Activated CD4-positive, alpha-beta memory T cell treated with anti-CD3 and anti-CD28 coated beads for 36 hours (primary cell): ENCODE measurements at regions of chr4 and their contacts with region 1.

Region 1: GRCh38 chr4:75895744-75896314 is 6.4 kb downstream of the PPEF2 start:
- DNase-seq: peak; percentile 14
- H3K4me3 Mint-ChIP-seq: no peak overlapping the region
- H3K27ac Mint-ChIP-seq: no peak overlapping the region
- H3K4me1 Mint-ChIP-seq: no peaks in the 10 kb centered on the region
- H3K27me3 Mint-ChIP-seq: no peaks in the 10 kb centered on the region

Region 2: GRCh38 chr4:75867135-75867534 is 28.7 kb before region 1 on chr4:
- CTCF ChIA-PET with region 1: no interaction called
- POLR2A ChIA-PET with region 1: no interaction called
- intact Hi-C with region 1: no loop called
- DNase-seq: no peak
- H3K4me3 Mint-ChIP-seq: no peak overlapping the region
- H3K27ac Mint-ChIP-seq: no peak overlapping the region
- H3K4me1 Mint-ChIP-seq: no peaks in the 10 kb centered on the region
- H3K27me3 Mint-ChIP-seq: no peaks in the 10 kb centered on the region

Region 3: GRCh38 chr4:75880278-75880677 is 15.6 kb before region 1 on chr4:
- CTCF ChIA-PET with region 1: interaction called, 11 read pairs
- POLR2A ChIA-PET with region 1: no interaction called
- intact Hi-C with region 1: no loop called
- DNase-seq: no peak
- H3K4me3 Mint-ChIP-seq: no peak overlapping the region
- H3K27ac Mint-ChIP-seq: no peak overlapping the region
- H3K4me1 Mint-ChIP-seq: no peaks in the 10 kb centered on the region
- H3K27me3 Mint-ChIP-seq: no peaks in the 10 kb centered on the region

Region 4: DNA sequence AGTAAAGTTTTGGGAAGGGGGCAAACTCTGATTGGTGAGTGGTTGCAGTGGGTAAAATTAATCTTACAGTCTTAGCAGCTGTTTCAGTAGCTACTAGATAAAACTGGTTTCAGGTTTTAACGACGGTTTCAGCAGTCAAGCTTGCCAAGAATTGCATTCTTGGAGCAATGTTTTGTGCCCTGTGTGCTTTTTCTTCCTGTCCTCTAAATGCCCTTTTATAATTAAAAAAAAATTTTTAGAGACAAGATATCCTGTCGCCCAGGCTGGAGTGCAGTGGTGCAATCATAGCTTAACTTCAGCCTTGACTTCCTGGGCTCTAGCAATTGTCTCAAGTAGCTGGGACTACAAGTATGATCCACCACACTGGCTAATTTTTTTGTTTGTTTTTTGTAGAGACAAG is 12.7 kb after region 1 on chr4:
- CTCF ChIA-PET with region 1: interaction called, 33 read pairs
- POLR2A ChIA-PET with region 1: no interaction called
- intact Hi-C with region 1: no loop called
- DNase-seq: no peak
- H3K4me3 Mint-ChIP-seq: no peak overlapping the region
- H3K27ac Mint-ChIP-seq: no peak overlapping the region
- H3K4me1 Mint-ChIP-seq: no peaks in the 10 kb centered on the region
- H3K27me3 Mint-ChIP-seq: no peaks in the 10 kb centered on the region

Region 5: DNA sequence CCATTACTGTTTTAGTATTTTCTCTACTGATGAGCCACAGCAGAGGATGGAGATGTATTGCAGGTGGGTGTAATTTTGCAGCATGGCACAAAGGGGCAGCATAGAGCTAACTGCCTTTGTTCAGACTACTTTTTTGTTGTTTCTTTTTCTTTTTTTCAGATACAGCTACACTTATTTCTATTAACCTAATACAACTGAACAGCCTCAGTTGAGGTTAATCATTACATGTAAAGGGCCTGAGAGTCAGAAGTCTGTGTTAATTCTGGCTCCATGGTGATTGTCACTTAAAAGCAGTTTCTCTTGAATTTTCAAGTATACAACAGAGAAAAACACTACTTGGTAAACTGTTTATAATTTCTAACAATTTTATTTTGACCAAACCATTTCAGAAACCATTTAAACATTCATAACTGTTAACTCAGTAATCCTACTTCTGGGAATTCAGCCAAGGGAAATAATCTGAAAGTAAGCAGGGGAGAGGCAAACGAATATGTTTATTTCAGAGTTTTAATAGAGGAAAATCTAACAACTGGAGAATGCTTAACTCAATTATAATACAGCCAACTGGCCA is 20.3 kb after region 1 on chr4:
- CTCF ChIA-PET with region 1: interaction called, 33 read pairs
- POLR2A ChIA-PET with region 1: no interaction called
- intact Hi-C with region 1: no loop called
- DNase-seq: peak; percentile 37
- H3K4me3 Mint-ChIP-seq: no peak overlapping the region
- H3K27ac Mint-ChIP-seq: no peak overlapping the region
- H3K4me1 Mint-ChIP-seq: no peaks in the 10 kb centered on the region
- H3K27me3 Mint-ChIP-seq: no peaks in the 10 kb centered on the region

Region 6: GRCh38 chr4:75940692-75941253 is 44.9 kb after region 1 on chr4 and contains the start of gene NAAA:
- CTCF ChIA-PET with region 1: interaction called, 33 read pairs
- POLR2A ChIA-PET with region 1: interaction called, 3 read pairs
- intact Hi-C with region 1: no loop called
- DNase-seq: peak; percentile 91
- H3K4me3 Mint-ChIP-seq: peak within 1 kb of the TSS; percentile 96
- H3K27ac Mint-ChIP-seq: peak within 1 kb of the TSS; percentile 93
- H3K4me1 Mint-ChIP-seq: peaks cover 20% of the 10 kb centered on the region
- H3K27me3 Mint-ChIP-seq: no peaks in the 10 kb centered on the region
- total RNA-seq, gene NAAA: 31.7 to 32.2 TPM

Region 7: GRCh38 chr4:76011700-76012387 is 116.0 kb after region 1 on chr4:
- CTCF ChIA-PET with region 1: no interaction called
- POLR2A ChIA-PET with region 1: no interaction called
- intact Hi-C with region 1: no loop called
- DNase-seq: peak; percentile 20
- H3K4me3 Mint-ChIP-seq: no peak overlapping the region
- H3K27ac Mint-ChIP-seq: no peak overlapping the region
- H3K4me1 Mint-ChIP-seq: peaks cover 13% of the 10 kb centered on the region
- H3K27me3 Mint-ChIP-seq: no peaks in the 10 kb centered on the region

Region 8: DNA sequence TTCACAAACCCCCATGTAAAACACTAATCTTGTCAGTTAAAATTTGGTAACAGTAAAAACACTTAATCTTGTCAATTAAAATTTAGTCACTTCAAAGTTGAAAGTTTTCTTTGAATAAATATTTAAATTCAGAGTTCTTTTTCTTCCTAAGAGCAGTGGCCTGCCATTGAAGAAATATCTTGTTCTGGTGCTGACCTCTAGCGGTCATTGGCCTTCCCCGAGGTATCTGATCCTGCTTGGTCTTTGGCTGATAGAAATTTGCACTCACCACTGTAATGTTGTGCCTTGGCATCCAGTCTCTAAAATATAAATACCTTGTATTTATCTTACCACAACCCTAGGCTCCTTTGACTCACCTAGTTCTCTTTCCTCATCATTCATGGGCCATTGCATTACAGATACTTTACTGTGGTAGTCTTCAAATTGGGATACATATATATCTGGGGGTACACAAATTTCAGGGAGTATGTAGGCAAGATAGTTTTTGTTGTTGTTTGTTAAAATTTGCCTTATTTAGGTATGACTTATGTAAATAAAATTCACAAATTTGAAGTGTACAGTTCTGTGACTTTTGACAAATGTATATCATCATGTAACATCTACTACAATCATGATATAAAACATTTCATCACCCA is 171.9 kb after region 1 on chr4:
- CTCF ChIA-PET with region 1: no interaction called
- POLR2A ChIA-PET with region 1: no interaction called
- intact Hi-C with region 1: loop called (anchors 1 kb)
- DNase-seq: peak; percentile 79
- H3K4me3 Mint-ChIP-seq: no peak overlapping the region
- H3K27ac Mint-ChIP-seq: no peak overlapping the region
- H3K4me1 Mint-ChIP-seq: no peaks in the 10 kb centered on the region
- H3K27me3 Mint-ChIP-seq: no peaks in the 10 kb centered on the region

Region 9: DNA sequence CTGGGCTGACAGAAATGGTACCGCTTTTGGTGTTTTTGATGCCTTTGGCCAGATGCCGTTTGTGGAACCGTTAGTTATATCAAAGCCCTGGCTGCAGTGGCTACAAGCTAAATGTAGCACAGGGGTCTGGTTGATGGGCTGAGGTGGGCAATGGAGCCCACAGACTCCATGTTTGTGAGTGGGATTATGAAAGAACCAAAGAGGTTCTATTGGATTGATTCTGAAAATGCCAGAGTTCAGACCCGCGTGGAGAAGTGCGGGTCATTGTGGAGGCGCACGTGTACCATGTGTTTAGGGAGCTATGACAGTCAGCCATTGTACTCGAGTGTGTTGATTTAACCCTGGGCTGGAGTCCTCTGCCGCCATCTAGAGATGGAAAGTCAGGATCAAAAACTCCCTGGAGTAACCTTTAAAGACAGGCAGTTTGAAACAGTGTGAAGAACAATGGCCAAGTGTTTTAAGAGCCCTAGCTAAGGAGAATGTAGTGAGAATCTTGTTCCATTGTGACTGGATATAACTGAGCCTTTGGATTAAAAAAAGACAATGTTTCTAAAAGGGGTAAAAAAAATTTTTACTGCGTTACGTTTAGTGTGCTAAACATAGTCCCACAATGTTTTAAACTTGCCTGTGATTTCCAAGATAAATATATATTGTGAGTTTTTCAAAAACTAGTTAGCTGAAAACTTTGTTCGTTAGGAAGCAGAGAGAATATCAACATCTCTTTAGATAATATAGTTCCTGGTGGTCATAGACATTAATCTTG is 191.4 kb after region 1 on chr4:
- CTCF ChIA-PET with region 1: interaction called, 5 read pairs
- POLR2A ChIA-PET with region 1: no interaction called
- intact Hi-C with region 1: loop called (anchors 5 kb)
- DNase-seq: peak; percentile 31
- H3K4me3 Mint-ChIP-seq: no peak overlapping the region
- H3K27ac Mint-ChIP-seq: no peak overlapping the region
- H3K4me1 Mint-ChIP-seq: peaks cover 4% of the 10 kb centered on the region
- H3K27me3 Mint-ChIP-seq: peaks cover 2% of the 10 kb centered on the region